Posterior cingulate gyrus (tissue), 11 donors: ENCODE measurements at regions of chr7 and their contacts with region 1.

Region 1: GRCh38 chr7:36487756-36488336 is 98.2 kb downstream of the ANLN start:
- DNase-seq: no peak

Region 2: DNA sequence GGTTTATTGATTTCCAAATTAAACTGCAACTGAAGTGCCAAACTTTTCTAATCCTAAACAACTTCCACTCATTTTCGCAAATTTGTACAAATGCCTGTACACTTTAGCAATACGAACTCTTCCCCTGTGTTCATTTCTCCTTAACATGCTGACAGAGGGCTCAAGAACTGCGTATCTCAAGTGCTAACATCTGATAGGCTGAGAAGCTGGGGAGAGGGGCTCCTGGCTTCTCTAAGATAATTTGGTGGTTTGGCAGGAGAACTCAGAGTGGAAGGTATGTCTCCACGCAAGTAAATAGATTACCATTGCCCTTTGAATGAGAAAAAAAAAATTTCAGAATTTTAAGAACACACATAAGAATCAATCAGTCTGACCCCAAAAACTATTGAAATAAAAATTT is 151.5 kb before region 1 on chr7:
- intact Hi-C with region 1: no loop called
- DNase-seq: no peak

Region 3: GRCh38 chr7:36670585-36671431 is 183.0 kb after region 1 on chr7:
- intact Hi-C with region 1: loop called (anchors 2 kb)
- DNase-seq: peak in 6 of 10 donors; percentile 46 to 87 (median 62)

Region 4: DNA sequence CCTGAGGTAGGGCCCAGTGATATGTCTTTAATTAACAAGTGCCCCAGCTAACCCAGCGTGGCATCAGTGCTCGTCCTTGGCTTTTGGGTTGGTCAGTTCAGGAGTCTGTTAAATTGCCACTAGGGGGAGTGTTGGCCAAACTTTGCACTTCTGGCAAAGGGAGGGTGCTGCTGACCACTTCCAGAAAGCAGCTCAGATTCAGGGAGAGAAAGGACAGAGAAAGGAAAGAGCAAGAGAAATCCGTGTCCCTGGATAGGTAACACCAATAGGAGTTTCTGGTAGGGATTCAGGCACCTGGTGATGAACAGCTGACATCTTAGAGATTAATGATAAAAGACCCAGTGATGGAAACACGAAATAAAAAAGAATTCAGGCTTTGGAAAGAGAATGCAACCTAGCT is 479.5 kb after region 1 on chr7:
- intact Hi-C with region 1: loop called (anchors 10 kb)
- DNase-seq: peak in 7 of 10 donors; percentile 31 to 92 (median 61)

Region 5: DNA sequence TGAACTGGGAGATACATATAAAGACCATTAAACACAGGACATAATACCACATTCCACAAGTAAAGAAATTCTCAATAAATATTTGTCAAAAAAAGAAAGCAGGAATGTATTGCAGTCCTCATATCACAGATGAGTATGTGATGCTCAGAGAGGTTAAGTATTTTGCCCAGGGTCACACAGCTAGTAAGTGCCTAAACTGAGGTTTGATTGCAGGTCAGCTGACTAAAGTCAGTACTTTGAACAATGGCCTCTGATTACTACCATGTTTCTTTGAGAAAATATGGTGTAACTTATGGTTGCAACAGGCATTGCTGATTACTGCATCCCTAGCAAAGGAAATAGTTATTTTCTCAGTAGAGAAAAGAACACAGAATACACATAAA is 693.7 kb after region 1 on chr7:
- intact Hi-C with region 1: loop called (anchors 5 kb)
- DNase-seq: no peak